HEK293 (cell line): ENCODE measurements at regions of chr5 and their contacts with region 1.

Region 1: DNA sequence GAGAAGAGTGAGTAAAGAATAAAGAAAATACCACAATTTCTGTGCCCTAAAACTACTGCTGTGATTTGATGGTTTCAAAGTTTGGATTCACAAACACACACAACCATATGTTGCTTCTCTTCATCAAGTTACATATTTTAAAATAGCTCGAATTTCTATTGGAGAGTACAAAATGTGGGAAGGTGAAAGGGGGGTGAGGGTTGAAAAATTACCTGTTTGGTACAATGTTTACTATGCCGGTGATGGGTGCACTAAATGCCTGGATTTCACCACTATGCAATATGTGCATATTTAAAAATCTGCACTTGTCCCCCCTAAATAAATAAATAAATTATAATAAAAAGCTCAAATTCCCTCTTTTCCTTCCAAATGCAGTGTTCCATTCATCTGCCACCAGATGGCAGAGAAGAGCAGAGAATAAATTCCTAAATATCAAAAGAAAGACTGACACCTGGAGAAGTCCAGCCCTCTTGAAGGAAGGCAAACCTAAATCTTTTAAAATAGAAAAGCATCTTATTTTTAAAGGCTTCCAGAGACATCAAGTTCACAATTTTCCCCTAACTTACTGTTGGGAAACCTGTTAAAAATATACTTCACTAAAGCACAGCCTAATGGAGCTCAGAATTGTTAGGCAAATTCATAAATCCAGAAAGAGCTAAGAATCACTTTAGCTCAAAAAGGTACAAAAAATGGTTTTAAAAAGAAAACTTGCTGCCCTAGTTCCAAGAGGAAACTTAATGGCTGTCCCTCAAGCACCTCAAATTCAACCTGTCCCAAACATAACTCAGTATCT is 24.8 kb upstream of the HNRNPA0 start:
- H3K4me3 ChIP-seq: no peak overlapping the region
- H3K27ac ChIP-seq: no peak overlapping the region
- H3K4me1 ChIP-seq: no peaks in the 10 kb centered on the region
- CTCF ChIP-seq: no peak

Region 2: GRCh38 chr5:137760330-137761188 is 18.4 kb before region 1 on chr5:
- CTCF ChIA-PET with region 1: interaction called, 22 read pairs
- POLR2A ChIA-PET with region 1: no interaction called
- H3K4me3 ChIP-seq: no peak overlapping the region
- H3K27ac ChIP-seq: no peak overlapping the region
- H3K4me1 ChIP-seq: no peaks in the 10 kb centered on the region
- CTCF ChIP-seq: no peak

Region 3: GRCh38 chr5:137819768-137820167 is 40.8 kb after region 1 on chr5:
- CTCF ChIA-PET with region 1: interaction called, 16 read pairs
- POLR2A ChIA-PET with region 1: no interaction called
- H3K4me3 ChIP-seq: no peak overlapping the region
- H3K27ac ChIP-seq: no peak overlapping the region
- H3K4me1 ChIP-seq: no peaks in the 10 kb centered on the region
- CTCF ChIP-seq: no peak

Region 4: DNA sequence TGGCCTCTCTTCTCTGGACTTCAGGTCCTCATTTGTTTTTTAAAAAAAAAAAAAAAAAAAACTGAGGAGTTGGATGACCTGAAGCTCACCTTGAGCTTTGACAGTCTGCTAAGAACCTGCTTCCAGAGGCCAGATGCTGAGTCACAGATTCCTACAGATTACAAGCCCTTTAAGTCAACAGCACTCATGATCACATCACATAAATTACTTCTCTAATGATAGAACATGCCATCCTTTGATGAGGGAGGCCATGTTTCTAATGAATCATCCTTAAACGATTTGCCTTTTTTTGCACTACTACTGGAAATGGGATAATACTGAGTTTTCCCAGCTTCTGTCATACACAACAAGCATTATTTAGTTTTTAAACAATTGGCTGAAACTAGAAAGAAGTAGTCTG is 54.5 kb after region 1 on chr5:
- CTCF ChIA-PET with region 1: interaction called, 10 read pairs
- POLR2A ChIA-PET with region 1: no interaction called
- H3K4me3 ChIP-seq: no peak overlapping the region
- H3K27ac ChIP-seq: no peak overlapping the region
- H3K4me1 ChIP-seq: peaks cover 22% of the 10 kb centered on the region; the same call in 1 of the 2 replicates
- CTCF ChIP-seq: no peak

Region 5: GRCh38 chr5:138035605-138036537 is 256.9 kb after region 1 on chr5:
- CTCF ChIA-PET with region 1: interaction called, 27 read pairs
- POLR2A ChIA-PET with region 1: no interaction called
- H3K4me3 ChIP-seq: no peak overlapping the region
- H3K27ac ChIP-seq: no peak overlapping the region
- H3K4me1 ChIP-seq: no peaks in the 10 kb centered on the region
- CTCF ChIP-seq: peak; percentile 90

Region 6: GRCh38 chr5:138077065-138077696 is 298.2 kb after region 1 on chr5:
- CTCF ChIA-PET with region 1: interaction called, 15 read pairs
- POLR2A ChIA-PET with region 1: no interaction called
- H3K4me3 ChIP-seq: no peak overlapping the region
- H3K27ac ChIP-seq: no peak overlapping the region
- H3K4me1 ChIP-seq: no peaks in the 10 kb centered on the region
- CTCF ChIP-seq: peak; percentile 74; the same call in 1 of the 2 replicates